ENCODE measurements at regions of chr2 and their contacts with region 1.

Region 1: DNA sequence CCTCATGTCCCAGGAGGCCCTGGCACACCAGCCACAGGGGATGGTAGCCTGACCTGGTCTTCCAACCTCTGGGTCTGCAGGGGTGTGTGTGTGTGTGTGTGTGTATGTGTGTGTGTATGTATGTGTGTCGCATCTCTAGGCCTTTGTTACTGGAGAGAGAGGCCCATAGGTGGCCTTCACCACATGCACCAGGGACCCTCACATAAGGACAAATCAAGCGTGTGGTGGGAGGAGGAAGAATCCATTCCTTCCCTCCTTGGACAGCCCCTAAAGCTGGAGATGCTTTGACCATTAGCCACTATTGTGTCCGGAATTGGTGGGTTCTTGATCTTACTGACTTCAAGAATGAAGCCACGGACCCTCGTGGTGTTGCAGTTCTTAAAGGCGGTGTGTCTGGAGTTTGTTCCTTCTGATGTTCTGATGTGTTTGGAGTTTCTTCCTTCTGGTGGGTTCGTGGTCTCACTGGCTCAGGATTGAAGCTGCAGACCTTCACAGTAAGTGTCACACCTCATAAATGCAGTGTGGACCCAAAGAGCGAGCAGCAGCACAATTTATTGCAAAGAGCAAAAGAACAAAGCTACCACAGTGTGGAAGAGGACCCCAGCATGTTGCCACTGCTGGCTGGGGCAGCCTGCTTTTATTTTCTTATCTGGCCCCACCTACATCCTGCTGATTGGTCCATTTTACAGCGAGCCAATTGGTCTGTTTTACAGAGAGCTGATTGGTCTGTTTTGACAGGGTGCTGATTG is 104.1 kb downstream of the DDX1 start:
- DNase-seq: no peak
- H3K4me3 ChIP-seq: no peak overlapping the region
- H3K27ac ChIP-seq: no peak overlapping the region
- H3K4me1 ChIP-seq: no peaks in the 10 kb centered on the region
- H3K27me3 ChIP-seq: no peaks in the 10 kb centered on the region
- CTCF ChIP-seq: no peak
- POLR2A ChIP-seq: no peak

Region 2: DNA sequence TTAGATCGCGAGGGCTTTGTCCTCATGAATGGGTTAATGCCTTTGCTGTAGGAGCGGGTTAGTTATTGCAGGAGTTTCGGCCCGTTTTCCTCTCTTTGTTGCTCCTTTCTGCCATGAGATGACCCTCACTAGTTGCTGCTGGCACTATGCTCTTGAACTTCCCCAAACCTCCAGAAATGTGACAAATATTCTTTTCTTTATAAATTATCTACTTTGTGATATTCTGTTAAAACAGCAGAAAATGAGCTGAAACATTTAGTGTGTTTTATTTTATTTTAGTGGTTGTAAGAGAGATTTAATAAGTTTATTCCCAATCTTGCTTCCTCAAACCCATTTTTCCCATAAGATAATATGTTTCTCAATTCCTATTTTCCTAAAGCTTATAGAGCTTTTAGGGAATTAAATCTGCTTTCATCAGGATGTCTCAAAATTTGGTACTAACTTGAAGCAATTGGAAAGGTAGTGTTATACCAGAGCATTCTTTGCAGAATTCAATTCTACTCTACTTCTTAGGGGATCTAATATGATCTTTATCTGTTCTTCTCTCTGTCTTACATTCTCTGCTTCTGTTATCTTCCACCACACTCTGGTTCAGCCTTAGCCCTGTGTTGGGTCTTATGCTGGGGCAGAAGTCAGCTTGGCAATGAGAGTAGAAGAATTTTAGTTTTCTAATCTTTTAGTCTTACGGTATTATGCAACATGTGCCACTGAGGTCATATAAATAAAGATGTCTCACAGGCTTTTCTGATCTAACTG is 81.0 kb before region 1 on chr2:
- intact Hi-C with region 1: no loop called
- DNase-seq: no peak
- H3K4me3 ChIP-seq: no peak overlapping the region
- H3K27ac ChIP-seq: no peak overlapping the region
- H3K4me1 ChIP-seq: no peaks in the 10 kb centered on the region
- H3K27me3 ChIP-seq: no peaks in the 10 kb centered on the region
- CTCF ChIP-seq: no peak
- POLR2A ChIP-seq: no peak

Region 3: DNA sequence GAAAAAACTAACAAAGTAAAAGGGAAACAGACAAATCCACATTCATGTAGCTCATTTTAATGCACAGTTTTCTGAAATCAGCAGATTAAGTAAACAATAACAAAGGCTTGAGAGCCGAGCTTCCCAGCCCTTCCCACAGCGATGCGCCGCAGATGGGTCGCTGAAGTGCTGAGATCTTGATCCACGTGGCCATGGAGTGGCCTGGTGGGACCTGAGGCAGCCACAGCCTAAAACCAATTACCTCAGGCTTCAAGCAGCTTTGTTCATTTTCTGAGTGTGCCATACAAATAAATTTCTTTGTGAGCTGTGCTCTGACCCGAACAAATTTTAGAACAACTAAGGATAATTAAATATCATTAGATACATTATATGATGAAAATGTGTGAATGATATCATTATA is 995.5 kb after region 1 on chr2:
- intact Hi-C with region 1: loop called (anchors 5 kb)
- DNase-seq: no peak
- H3K4me3 ChIP-seq: no peak overlapping the region
- H3K27ac ChIP-seq: no peak overlapping the region
- H3K4me1 ChIP-seq: no peaks in the 10 kb centered on the region
- H3K27me3 ChIP-seq: no peaks in the 10 kb centered on the region
- CTCF ChIP-seq: no peak
- POLR2A ChIP-seq: no peak